CD4-positive, alpha-beta memory T cell (primary cell): ENCODE measurements at regions of chr1 and their contacts with region 1.

Region 1: GRCh38 chr1:28409090-28409489 is 39.5 kb downstream of the PHACTR4 start:
- DNase-seq: no peak
- H3K4me3 ChIP-seq: no peak overlapping the region
- H3K4me3 Mint-ChIP-seq: no peak overlapping the region
- H3K27ac ChIP-seq: no peak overlapping the region
- H3K27ac Mint-ChIP-seq: no peak overlapping the region
- H3K4me1 ChIP-seq: peaks cover 11% of the 10 kb centered on the region
- H3K4me1 Mint-ChIP-seq: peaks cover 0 to 12% (median 6%) of the 10 kb centered on the region in 4 donors
- H3K27me3 ChIP-seq: no peaks in the 10 kb centered on the region
- H3K27me3 Mint-ChIP-seq: no peaks in the 10 kb centered on the region

Region 2: DNA sequence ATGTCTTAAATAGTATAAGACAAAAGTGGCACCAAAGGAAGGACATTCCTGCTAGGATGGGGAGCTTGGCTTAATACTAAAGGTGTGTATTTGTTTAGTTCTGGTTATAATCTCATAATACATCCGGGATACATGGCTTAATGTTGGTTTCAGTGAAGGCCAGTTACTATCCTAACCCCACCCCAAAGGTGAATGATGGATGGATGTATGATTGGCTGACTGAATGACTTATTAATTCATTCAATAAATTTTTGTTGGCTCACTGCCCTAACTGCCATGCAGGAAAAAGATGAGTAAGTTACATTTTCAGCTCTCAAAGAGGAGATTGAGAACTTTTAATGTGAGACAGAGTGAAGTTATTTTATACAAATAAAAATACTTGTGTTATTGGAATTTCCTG is 12.7 kb after region 1 on chr1:
- CTCF ChIA-PET with region 1: interaction called, 11 read pairs
- POLR2A ChIA-PET with region 1: no interaction called
- intact Hi-C with region 1: no loop called
- DNase-seq: no peak
- H3K4me3 ChIP-seq: no peak overlapping the region
- H3K4me3 Mint-ChIP-seq: no peak overlapping the region
- H3K27ac ChIP-seq: no peak overlapping the region
- H3K27ac Mint-ChIP-seq: no peak overlapping the region
- H3K4me1 ChIP-seq: peaks cover 8% of the 10 kb centered on the region
- H3K4me1 Mint-ChIP-seq: peaks cover 7 to 13% (median 11%) of the 10 kb centered on the region in 4 donors
- H3K27me3 ChIP-seq: no peaks in the 10 kb centered on the region
- H3K27me3 Mint-ChIP-seq: no peaks in the 10 kb centered on the region

Region 3: GRCh38 chr1:28602536-28603439 is 193.7 kb after region 1 on chr1:
- CTCF ChIA-PET with region 1: interaction called, 8 read pairs
- POLR2A ChIA-PET with region 1: no interaction called
- intact Hi-C with region 1: loop called (anchors 10 kb)
- DNase-seq: peak in 3 of 5 donors; percentile 13 to 28 (median 25)
- H3K4me3 ChIP-seq: no peak overlapping the region
- H3K4me3 Mint-ChIP-seq: no peak overlapping the region
- H3K27ac ChIP-seq: no peak overlapping the region
- H3K27ac Mint-ChIP-seq: peak overlapping the region in 2 of 7 donors; percentile 10 to 77
- H3K4me1 ChIP-seq: no peaks in the 10 kb centered on the region
- H3K4me1 Mint-ChIP-seq: peaks cover 0 to 2% (median 0%) of the 10 kb centered on the region in 4 donors
- H3K27me3 ChIP-seq: no peaks in the 10 kb centered on the region
- H3K27me3 Mint-ChIP-seq: no peaks in the 10 kb centered on the region

Region 4: DNA sequence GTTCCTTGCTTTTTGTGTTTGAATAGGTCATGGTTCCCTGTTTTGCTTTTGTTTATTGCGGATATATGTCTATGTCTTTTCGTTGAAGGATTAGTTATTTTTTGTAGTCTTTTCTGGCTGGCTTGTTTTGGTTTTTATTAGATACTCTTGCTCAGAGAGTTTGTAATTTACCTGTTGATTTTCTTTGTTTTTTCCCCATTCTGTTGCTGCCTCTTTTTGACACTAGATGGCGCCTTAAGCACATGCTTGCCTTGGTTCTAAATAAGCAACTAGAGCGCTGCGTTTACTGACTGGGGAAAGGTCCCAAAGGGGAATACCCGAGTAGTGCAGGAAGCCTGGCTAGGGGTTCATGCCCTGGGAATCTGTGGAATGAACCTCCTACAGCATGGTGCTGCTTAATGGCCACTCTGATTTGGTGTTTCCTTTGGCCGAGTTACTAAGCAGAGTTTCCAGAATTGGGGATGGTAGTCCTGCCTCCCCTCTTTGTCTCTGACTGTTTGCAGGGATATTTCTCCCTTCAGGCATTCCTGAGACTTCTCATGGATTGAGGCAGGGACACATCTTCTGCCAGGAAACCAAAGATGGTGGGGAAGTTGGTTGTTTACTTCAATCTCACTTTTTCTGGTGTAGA is 970.5 kb after region 1 on chr1:
- CTCF ChIA-PET with region 1: no interaction called
- POLR2A ChIA-PET with region 1: no interaction called
- intact Hi-C with region 1: no loop called
- DNase-seq: no peak
- H3K4me3 ChIP-seq: no peak overlapping the region
- H3K4me3 Mint-ChIP-seq: no peak overlapping the region
- H3K27ac ChIP-seq: no peak overlapping the region
- H3K27ac Mint-ChIP-seq: no peak overlapping the region
- H3K4me1 ChIP-seq: no peaks in the 10 kb centered on the region
- H3K4me1 Mint-ChIP-seq: no peaks in the 10 kb centered on the region
- H3K27me3 ChIP-seq: no peaks in the 10 kb centered on the region
- H3K27me3 Mint-ChIP-seq: peaks cover 22 to 24% of the 10 kb centered on the region in 2 donors